ENCODE measurements at regions of chr7 and their contacts with region 1.

Region 1: DNA sequence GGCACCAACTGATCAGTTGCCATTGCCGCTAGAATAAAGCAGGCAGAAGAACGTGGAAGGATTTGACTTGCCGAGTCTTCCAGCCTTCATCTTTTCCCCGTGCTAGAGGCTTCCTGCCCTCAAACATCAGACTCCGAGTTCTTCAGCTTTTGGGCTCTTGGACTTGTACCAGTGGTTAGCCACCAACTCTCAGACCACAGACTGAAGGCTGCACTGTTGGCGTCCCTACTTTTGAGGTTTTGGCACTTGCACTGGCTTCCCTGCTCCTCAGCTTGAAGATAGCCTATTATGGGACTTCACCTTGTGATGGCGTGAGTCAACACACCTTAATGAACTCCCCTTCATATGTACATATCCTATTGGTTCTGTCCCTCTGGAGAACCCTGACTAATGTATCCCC is 57.3 kb upstream of the KCND2 start:
- DNase-seq: no peak
- ATAC-seq: no peak
- H3K4me3 ChIP-seq: no peak overlapping the region
- H3K27ac ChIP-seq: no peak overlapping the region
- H3K4me1 ChIP-seq: no peaks in the 10 kb centered on the region
- H3K27me3 ChIP-seq: no peaks in the 10 kb centered on the region
- CTCF ChIP-seq: no peak

Region 2: DNA sequence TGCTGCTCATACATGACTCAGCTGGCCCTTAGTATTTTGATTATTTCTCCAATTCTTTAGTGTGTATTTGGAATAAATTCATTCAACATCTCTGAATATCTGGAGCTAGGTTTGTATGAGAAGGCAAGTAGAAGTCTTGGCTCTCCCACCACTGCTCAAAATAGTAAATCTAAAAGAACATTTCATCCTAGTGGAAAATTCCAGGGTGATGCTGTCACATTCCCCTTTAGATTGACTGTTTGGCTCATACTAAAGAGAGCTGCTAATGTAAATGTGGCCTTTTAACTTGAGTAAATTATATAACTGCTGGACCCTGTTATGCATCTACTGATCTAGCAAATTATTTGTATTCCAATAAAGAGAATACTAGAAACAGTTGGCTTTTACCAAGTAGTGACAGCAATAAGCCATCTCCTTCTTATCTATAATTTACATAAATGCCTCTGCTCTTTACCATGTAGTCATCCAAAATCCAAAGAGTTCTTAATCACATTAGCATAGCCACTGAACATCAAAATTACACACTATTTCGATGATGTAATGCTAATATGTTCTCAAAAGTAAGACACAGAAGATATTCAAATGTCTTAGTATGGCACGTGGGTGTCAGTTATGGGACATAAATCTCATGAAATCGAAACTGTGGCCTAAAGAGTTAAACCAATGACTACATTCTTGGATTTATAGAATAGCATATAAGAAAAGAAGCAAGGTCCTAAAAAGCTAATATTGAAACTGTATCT is 29.5 kb before region 1 on chr7:
- CTCF ChIA-PET with region 1: no interaction called
- POLR2A ChIA-PET with region 1: no interaction called
- in situ Hi-C with region 1: no loop called
- intact Hi-C with region 1: no loop called
- DNase-seq: no peak
- ATAC-seq: no peak
- H3K4me3 ChIP-seq: no peak overlapping the region
- H3K27ac ChIP-seq: no peak overlapping the region
- H3K4me1 ChIP-seq: no peaks in the 10 kb centered on the region
- H3K27me3 ChIP-seq: no peaks in the 10 kb centered on the region
- CTCF ChIP-seq: no peak

Region 3: GRCh38 chr7:120229084-120229483 is 13.4 kb after region 1 on chr7:
- CTCF ChIA-PET with region 1: no interaction called
- POLR2A ChIA-PET with region 1: no interaction called
- in situ Hi-C with region 1: no loop called
- intact Hi-C with region 1: loop called (anchors 1 kb)
- DNase-seq: no peak
- ATAC-seq: no peak
- H3K4me3 ChIP-seq: no peak overlapping the region
- H3K27ac ChIP-seq: no peak overlapping the region
- H3K4me1 ChIP-seq: no peaks in the 10 kb centered on the region
- H3K27me3 ChIP-seq: no peaks in the 10 kb centered on the region
- CTCF ChIP-seq: no peak

Measured in Panc1 (cell line).